Astrocyte of the cerebellum (primary cell): ENCODE measurements at regions of chr7 and their contacts with region 1.

Region 1: GRCh38 chr7:115707258-115708012 is 323.1 kb downstream of the TFEC start:
- DNase-seq: no peak
- H3K4me3 ChIP-seq: no peak overlapping the region
- CTCF ChIP-seq: peak; percentile 45

Region 2: DNA sequence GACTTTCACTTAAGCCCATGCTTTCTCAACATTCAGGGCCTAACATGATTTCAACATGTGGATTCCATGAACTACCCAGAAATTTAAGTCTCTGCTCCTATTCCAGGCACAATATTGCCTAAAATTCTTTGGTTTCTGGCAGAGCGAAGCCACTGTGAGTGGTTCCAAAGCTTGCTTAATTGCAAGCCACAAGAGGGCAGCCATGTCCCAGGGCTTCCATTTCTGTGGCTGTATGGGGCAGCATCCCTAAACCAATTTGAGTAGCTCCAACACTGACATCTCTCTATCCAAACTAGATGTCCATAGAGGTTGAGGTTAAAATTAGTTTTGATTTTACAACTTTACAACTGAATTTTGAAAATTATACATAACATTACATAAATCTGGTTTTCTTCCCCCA is 841.9 kb before region 1 on chr7:
- in situ Hi-C with region 1: loop called (anchors 25 kb)
- DNase-seq: peak; percentile 45
- H3K4me3 ChIP-seq: no peak overlapping the region
- CTCF ChIP-seq: peak; percentile 84

Region 3: GRCh38 chr7:114997487-114998404 is 709.7 kb before region 1 on chr7:
- in situ Hi-C with region 1: no loop called
- DNase-seq: no peak
- H3K4me3 ChIP-seq: no peak overlapping the region
- CTCF ChIP-seq: no peak